Endothelial cell of umbilical vein (primary cell): ENCODE measurements at regions of chr11 and their contacts with region 1.

Region 1: DNA sequence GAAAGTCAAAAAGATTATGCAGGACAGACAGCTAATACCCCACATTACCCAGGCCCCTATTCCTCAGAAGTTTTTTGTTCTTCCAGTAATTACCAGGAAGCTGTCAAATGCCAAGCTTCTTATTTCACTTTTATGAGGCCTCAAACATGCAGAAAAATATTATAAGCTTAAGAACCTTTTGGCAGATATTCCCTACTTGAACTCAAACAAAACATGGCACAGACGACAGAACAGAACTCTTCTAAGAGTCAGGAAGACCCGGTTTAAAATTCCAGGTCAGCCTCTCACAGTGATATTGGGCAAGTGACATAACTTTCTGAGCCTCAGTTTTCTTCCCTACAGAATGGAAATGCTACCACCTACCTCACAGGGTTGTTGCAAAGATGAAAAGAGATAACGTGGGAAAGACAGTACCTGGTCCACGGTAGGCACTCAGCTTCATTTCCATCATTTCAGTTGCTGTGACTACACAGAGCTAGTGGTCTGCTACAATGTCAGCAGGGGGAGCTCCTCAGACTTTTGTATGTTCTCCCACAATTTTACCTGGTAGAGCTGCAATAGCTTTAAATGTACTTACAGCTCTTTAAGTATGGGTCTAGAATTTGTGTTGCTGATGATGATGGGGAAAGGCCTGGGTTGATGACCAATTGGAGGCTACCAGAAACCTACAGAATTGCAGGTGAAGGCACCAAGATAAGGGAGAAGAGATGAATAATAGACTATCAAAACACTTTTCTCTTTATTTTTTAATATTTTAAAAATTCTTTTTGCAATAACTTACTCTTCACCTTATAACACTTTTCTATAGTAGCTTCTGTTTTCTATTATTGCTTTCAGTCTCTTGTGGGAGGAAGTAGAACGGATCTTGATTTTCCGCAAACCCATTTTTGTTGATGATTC is 98.3 kb upstream of the CHRM4 start:
- DNase-seq: peak; percentile 62
- H3K4me3 ChIP-seq: no peak overlapping the region
- H3K27ac ChIP-seq: no peak overlapping the region
- H3K4me1 ChIP-seq: peaks cover 27% of the 10 kb centered on the region
- H3K27me3 ChIP-seq: no peaks in the 10 kb centered on the region
- CTCF ChIP-seq: peak; percentile 66 to 68
- POLR2A ChIP-seq: no peak

Region 2: GRCh38 chr11:46475926-46476545 is 13.9 kb before region 1 on chr11:
- CTCF ChIA-PET with region 1: interaction called, 39 read pairs
- POLR2A ChIA-PET with region 1: no interaction called
- dilution Hi-C with region 1: no loop called
- intact Hi-C with region 1: no loop called
- DNase-seq: no peak
- H3K4me3 ChIP-seq: no peak overlapping the region
- H3K27ac ChIP-seq: no peak overlapping the region
- H3K4me1 ChIP-seq: no peaks in the 10 kb centered on the region
- H3K27me3 ChIP-seq: no peaks in the 10 kb centered on the region
- CTCF ChIP-seq: no peak
- POLR2A ChIP-seq: no peak

Region 3: DNA sequence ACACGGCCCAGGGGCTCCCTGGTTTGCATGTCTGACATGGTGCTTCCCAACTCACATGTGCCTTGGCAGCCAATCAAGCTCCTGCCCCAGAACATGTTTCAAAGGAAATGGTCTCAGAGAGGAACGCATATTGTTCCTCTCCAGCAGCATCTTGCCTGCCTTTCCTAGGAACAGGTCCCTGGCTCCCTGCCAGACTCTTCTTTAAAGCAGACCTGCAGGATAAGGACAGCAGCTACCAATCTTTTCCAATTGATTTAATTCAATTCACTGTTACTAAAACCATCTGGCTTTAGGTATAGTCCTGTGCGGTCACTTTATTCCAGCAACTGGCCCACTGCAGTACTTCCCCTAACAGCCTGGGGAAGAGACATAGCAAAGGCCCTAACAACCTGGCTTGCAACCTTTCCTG is 24.0 kb after region 1 on chr11:
- CTCF ChIA-PET with region 1: interaction called, 30 read pairs
- POLR2A ChIA-PET with region 1: no interaction called
- dilution Hi-C with region 1: no loop called
- intact Hi-C with region 1: loop called (anchors 1 kb)
- DNase-seq: peak; percentile 84
- H3K4me3 ChIP-seq: no peak overlapping the region
- H3K27ac ChIP-seq: peak overlapping the region; percentile 7
- H3K4me1 ChIP-seq: peaks cover 12% of the 10 kb centered on the region
- H3K27me3 ChIP-seq: no peaks in the 10 kb centered on the region
- CTCF ChIP-seq: no peak
- POLR2A ChIP-seq: no peak

Region 4: DNA sequence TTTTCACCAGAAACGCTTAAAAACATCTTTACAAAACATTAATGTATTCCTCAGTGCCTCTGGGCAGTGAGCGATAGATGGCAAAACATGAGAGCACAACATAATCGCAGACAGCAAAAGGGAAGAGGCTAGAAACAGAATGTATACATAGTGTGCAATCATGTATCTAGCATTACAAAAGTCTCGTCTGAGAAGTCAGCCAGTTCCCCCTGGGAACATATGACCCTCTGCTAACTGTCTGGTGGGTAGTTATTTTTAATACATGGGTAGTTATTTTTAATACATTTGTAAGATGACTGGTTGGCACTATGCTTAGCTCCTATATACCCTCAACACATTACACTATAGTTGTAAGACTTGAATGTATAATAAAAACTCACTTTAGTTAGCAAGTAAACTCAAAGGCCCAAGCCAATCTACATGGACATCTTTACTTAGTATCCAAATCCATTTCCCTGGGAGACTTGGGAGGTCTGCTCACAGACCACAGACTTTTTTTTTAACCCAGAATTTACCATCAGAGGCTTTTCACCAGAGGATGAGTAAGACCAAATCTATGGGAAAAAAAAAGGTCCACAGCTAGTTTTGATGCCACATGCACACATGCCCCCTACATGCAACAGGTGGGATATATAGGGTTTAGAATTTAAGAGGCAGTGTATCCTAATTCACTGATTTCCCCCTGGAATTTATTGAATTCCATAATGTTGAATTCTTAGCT is 32.2 kb after region 1 on chr11:
- CTCF ChIA-PET with region 1: interaction called, 31 read pairs
- POLR2A ChIA-PET with region 1: no interaction called
- dilution Hi-C with region 1: no loop called
- intact Hi-C with region 1: no loop called
- DNase-seq: no peak
- H3K4me3 ChIP-seq: no peak overlapping the region
- H3K27ac ChIP-seq: no peak overlapping the region
- H3K4me1 ChIP-seq: peaks cover 15% of the 10 kb centered on the region
- H3K27me3 ChIP-seq: no peaks in the 10 kb centered on the region
- CTCF ChIP-seq: peak in 1 of 2 donors; percentile 18
- POLR2A ChIP-seq: no peak

Region 5: GRCh38 chr11:46537537-46538295 is 47.8 kb after region 1 on chr11:
- CTCF ChIA-PET with region 1: interaction called, 114 read pairs
- POLR2A ChIA-PET with region 1: no interaction called
- dilution Hi-C with region 1: no loop called
- intact Hi-C with region 1: loop called (anchors 1 kb)
- DNase-seq: peak; percentile 75
- H3K4me3 ChIP-seq: no peak overlapping the region
- H3K27ac ChIP-seq: no peak overlapping the region
- H3K4me1 ChIP-seq: no peaks in the 10 kb centered on the region
- H3K27me3 ChIP-seq: no peaks in the 10 kb centered on the region
- CTCF ChIP-seq: peak; percentile 88 to 91
- POLR2A ChIP-seq: no peak

Region 6: GRCh38 chr11:46616998-46617675 is 127.2 kb after region 1 on chr11 and contains the starts of genes ATG13 and HARBI1:
- CTCF ChIA-PET with region 1: interaction called, 27 read pairs
- POLR2A ChIA-PET with region 1: no interaction called
- dilution Hi-C with region 1: no loop called
- intact Hi-C with region 1: no loop called
- DNase-seq: peak; percentile 89
- H3K4me3 ChIP-seq: peak within 1 kb of the TSS; percentile 64 to 97 (median 86)
- H3K27ac ChIP-seq: peak within 1 kb of the TSS; percentile 96
- H3K4me1 ChIP-seq: peaks cover 19% of the 10 kb centered on the region
- H3K27me3 ChIP-seq: no peaks in the 10 kb centered on the region
- CTCF ChIP-seq: no peak
- POLR2A ChIP-seq: peak; percentile 93
- total RNA-seq, gene ATG13: 66.5 and 67.3 TPM in 2 replicates
- total RNA-seq, gene HARBI1: 3.2 and 4.7 TPM in 2 replicates

Region 7: GRCh38 chr11:47099214-47099917 is 609.5 kb after region 1 on chr11:
- CTCF ChIA-PET with region 1: no interaction called
- POLR2A ChIA-PET with region 1: no interaction called
- dilution Hi-C with region 1: no loop called
- intact Hi-C with region 1: no loop called
- DNase-seq: peak; percentile 64
- H3K4me3 ChIP-seq: no peak overlapping the region
- H3K27ac ChIP-seq: no peak overlapping the region
- H3K4me1 ChIP-seq: peaks cover 6% of the 10 kb centered on the region
- H3K27me3 ChIP-seq: no peaks in the 10 kb centered on the region
- CTCF ChIP-seq: no peak
- POLR2A ChIP-seq: no peak